GM10248 (cell line): ENCODE measurements at regions of chr10 and their contacts with region 1.

Region 1: GRCh38 chr10:72337020-72337629 is 17.6 kb downstream of the DNAJB12 start:
- DNase-seq: peak; percentile 68
- CTCF ChIP-seq: peak; percentile 96

Region 2: DNA sequence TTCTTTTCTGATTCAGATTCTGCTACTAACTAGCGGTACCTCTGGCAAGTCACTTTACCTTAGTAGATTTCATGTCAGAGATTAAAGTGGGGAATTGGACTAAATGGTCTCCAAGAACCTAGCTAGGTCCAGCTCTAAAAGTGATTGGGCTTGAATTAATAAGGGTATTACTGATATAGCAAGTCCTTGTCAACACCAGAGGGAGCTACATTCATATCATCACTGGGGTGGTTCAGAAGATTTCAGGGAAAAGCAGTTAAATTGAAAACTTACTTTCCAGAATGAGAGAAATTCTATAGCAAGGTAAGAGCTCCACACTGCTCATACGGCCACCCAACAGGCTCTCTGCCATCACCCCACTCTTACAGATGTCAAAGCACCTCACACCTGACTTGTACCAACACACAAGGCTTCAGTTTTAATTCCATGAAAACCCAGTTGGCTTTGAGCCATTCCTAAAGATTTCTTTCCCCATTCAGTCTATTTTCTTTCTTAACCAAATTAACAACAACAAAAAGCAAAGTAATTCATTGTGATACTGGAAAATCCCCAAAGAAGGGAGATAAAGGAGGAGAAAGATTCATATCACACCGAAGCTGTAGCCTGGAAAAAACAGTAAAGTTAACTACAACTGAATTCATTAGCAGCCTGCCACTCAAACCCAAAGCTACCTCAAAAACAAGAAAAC is 210.8 kb before region 1 on chr10:
- CTCF ChIA-PET with region 1: interaction called, 24 read pairs
- POLR2A ChIA-PET with region 1: no interaction called
- DNase-seq: peak; percentile 36
- CTCF ChIP-seq: peak; percentile 37

Region 3: DNA sequence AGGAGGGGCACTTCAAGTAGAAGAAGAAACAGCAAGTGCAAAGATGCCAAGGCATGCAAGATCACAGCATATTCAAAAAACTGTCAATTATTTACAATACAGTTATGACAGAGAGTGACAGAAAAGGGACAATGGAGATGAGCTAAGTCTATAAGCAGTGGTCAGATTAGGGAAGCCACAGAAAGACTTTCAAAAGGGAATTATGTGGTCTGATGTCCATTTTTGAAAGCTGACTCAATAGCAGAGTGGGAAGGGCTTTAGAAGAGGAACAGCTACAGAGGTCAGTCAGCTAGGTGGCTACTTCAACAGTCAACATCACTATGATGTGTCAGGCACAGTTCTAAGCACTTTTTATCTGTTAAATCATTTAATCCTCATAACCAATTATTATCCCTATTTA is 203.6 kb before region 1 on chr10:
- CTCF ChIA-PET with region 1: interaction called, 24 read pairs
- POLR2A ChIA-PET with region 1: no interaction called
- DNase-seq: peak; percentile 68
- CTCF ChIP-seq: no peak

Region 4: DNA sequence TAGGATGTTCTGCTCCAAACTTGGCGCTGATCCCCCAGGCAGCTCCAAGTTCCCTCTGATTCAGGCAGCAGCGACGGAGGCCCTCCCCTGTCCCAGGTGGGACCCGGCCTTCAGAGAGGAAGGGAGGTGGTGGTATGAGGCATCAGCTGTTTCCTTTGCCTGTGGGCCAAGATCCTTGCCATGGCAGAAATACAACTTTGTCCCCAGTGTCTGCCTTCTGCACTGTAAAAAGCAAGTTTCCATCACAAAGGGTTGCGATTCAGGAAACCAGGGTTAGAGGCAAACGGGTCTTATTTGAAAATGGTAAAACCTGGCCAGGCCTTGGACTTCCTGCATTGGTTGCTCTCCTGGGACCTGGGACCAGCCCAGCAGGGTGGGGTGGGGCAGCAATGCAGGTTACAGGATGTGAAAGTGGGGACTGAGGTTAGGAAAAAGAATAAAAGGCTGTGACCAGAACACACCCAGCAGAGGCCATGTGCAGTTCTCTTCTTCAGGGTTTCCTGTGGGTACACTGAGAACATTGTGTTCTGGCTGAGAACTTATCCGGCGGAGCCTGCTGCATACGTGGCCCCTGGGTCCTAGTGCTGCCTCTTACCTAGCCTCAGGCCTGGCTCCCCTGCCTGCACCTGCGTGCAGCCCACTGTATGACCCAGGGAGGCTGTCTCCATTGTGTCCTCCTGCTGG is 88.5 kb before region 1 on chr10:
- CTCF ChIA-PET with region 1: interaction called, 11 read pairs
- POLR2A ChIA-PET with region 1: no interaction called
- DNase-seq: peak; percentile 81
- CTCF ChIP-seq: no peak

Region 5: GRCh38 chr10:72308320-72308987 is 28.7 kb before region 1 on chr10:
- CTCF ChIA-PET with region 1: interaction called, 10 read pairs
- POLR2A ChIA-PET with region 1: interaction called, 3 read pairs
- DNase-seq: no peak
- CTCF ChIP-seq: no peak

Region 6: GRCh38 chr10:72319416-72320254 is 17.5 kb before region 1 on chr10:
- CTCF ChIA-PET with region 1: interaction called, 41 read pairs
- POLR2A ChIA-PET with region 1: interaction called, 7 read pairs
- DNase-seq: peak; percentile 86
- CTCF ChIP-seq: no peak

Region 7: GRCh38 chr10:72354478-72355213 is 17.5 kb after region 1 on chr10 and contains the start of gene DNAJB12:
- CTCF ChIA-PET with region 1: interaction called, 78 read pairs
- POLR2A ChIA-PET with region 1: no interaction called
- DNase-seq: peak; percentile 94
- CTCF ChIP-seq: no peak

Region 8: GRCh38 chr10:72370201-72370722 is 33.1 kb after region 1 on chr10:
- CTCF ChIA-PET with region 1: no interaction called
- POLR2A ChIA-PET with region 1: no interaction called
- DNase-seq: no peak
- CTCF ChIP-seq: no peak